ENCODE measurements at regions of chr1 and their contacts with region 1.

Region 1: DNA sequence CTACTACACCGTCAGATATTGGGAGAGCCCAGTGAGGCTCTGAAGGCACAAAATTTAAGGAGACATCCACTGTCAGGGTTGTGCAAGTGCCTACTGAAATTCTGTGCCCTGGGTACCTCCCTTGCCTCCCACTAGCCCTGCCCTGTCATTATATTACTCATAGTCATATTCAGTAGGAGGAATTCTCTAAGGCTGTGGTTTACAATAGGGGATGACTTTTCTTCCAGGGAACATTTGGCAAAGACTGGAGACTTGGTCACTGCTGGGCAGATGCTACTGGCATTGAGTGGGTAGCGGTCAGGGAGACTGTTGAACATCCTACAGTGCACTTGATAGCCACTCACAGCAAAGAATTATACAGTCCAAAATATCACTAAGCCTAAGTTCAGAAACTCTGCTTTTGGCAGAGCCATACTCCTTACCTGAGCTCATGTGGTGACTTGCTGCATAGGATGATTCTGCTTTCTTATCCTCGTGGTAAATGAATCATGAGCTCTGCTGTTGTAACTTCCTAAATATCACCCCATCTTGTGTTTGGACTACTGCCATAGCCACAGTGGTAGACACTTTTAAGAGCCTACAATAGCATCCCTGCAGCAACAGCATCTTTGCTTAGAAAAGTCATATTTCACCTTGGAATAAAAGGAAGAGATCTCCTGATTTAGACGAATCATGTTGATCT is 563.4 kb upstream of the PLXNA2 start:
- DNase-seq: peak; percentile 96
- H3K4me3 ChIP-seq: no peak overlapping the region
- H3K27ac ChIP-seq: peak overlapping the region; percentile 94
- H3K4me1 ChIP-seq: peaks cover 38% of the 10 kb centered on the region
- H3K27me3 ChIP-seq: no peaks in the 10 kb centered on the region
- CTCF ChIP-seq: no peak

Region 2: GRCh38 chr1:208791456-208791855 is 16.1 kb before region 1 on chr1:
- CTCF ChIA-PET with region 1: no interaction called
- dilution Hi-C with region 1: no loop called
- in situ Hi-C with region 1: no loop called
- intact Hi-C with region 1: loop called (anchors 1 kb)
- DNase-seq: peak; percentile 29
- H3K4me3 ChIP-seq: no peak overlapping the region
- H3K27ac ChIP-seq: no peak overlapping the region
- H3K4me1 ChIP-seq: peaks cover 6% of the 10 kb centered on the region
- H3K27me3 ChIP-seq: no peaks in the 10 kb centered on the region
- CTCF ChIP-seq: no peak

Region 3: GRCh38 chr1:208892147-208892546 is 84.6 kb after region 1 on chr1:
- CTCF ChIA-PET with region 1: no interaction called
- dilution Hi-C with region 1: no loop called
- in situ Hi-C with region 1: no loop called
- intact Hi-C with region 1: no loop called
- DNase-seq: no peak
- H3K4me3 ChIP-seq: no peak overlapping the region
- H3K27ac ChIP-seq: no peak overlapping the region
- H3K4me1 ChIP-seq: no peaks in the 10 kb centered on the region
- H3K27me3 ChIP-seq: no peaks in the 10 kb centered on the region
- CTCF ChIP-seq: no peak

Region 4: GRCh38 chr1:208919371-208919770 is 111.8 kb after region 1 on chr1:
- CTCF ChIA-PET with region 1: no interaction called
- dilution Hi-C with region 1: no loop called
- in situ Hi-C with region 1: no loop called
- intact Hi-C with region 1: loop called (anchors 5 kb)
- DNase-seq: peak; percentile 41
- H3K4me3 ChIP-seq: no peak overlapping the region
- H3K27ac ChIP-seq: peak overlapping the region; percentile 3
- H3K4me1 ChIP-seq: peaks cover 32% of the 10 kb centered on the region
- H3K27me3 ChIP-seq: no peaks in the 10 kb centered on the region
- CTCF ChIP-seq: no peak

Region 5: GRCh38 chr1:208977638-208978256 is 170.2 kb after region 1 on chr1:
- CTCF ChIA-PET with region 1: no interaction called
- dilution Hi-C with region 1: no loop called
- in situ Hi-C with region 1: no loop called
- intact Hi-C with region 1: loop called (anchors 5 kb)
- DNase-seq: peak; percentile 67
- H3K4me3 ChIP-seq: no peak overlapping the region
- H3K27ac ChIP-seq: peak overlapping the region; percentile 49
- H3K4me1 ChIP-seq: peaks cover 39% of the 10 kb centered on the region
- H3K27me3 ChIP-seq: no peaks in the 10 kb centered on the region
- CTCF ChIP-seq: no peak

Region 6: GRCh38 chr1:209038735-209039134 is 231.1 kb after region 1 on chr1:
- CTCF ChIA-PET with region 1: no interaction called
- dilution Hi-C with region 1: no loop called
- in situ Hi-C with region 1: no loop called
- intact Hi-C with region 1: loop called (anchors 2 kb)
- DNase-seq: peak; percentile 80
- H3K4me3 ChIP-seq: no peak overlapping the region
- H3K27ac ChIP-seq: peak overlapping the region; percentile 96
- H3K4me1 ChIP-seq: peaks cover 31% of the 10 kb centered on the region
- H3K27me3 ChIP-seq: no peaks in the 10 kb centered on the region
- CTCF ChIP-seq: no peak

Region 7: GRCh38 chr1:209190591-209191261 is 383.1 kb after region 1 on chr1:
- CTCF ChIA-PET with region 1: no interaction called
- dilution Hi-C with region 1: no loop called
- in situ Hi-C with region 1: no loop called
- intact Hi-C with region 1: loop called (anchors 10 kb)
- DNase-seq: peak; percentile 43
- H3K4me3 ChIP-seq: no peak overlapping the region
- H3K27ac ChIP-seq: no peak overlapping the region
- H3K4me1 ChIP-seq: no peaks in the 10 kb centered on the region
- H3K27me3 ChIP-seq: no peaks in the 10 kb centered on the region
- CTCF ChIP-seq: peak; percentile 85 to 90